ENCODE measurements at regions of chr9 and their contacts with region 1.

Region 1: GRCh38 chr9:114155263-114155972 is at the start of gene COL27A1:
- DNase-seq: peak; percentile 73 to 88 (median 85)
- H3K4me3 ChIP-seq: peak within 1 kb of the TSS in 2 of 4 donors; percentile 51 to 80
- H3K27ac ChIP-seq: peak within 1 kb of the TSS in 3 of 5 donors; percentile 26 to 77 (median 68)
- H3K4me1 ChIP-seq: peaks cover 15 to 17% of the 10 kb centered on the region in 2 donors
- H3K27me3 ChIP-seq: peaks cover 15% of the 10 kb centered on the region
- CTCF ChIP-seq: peak; percentile 80 to 95 (median 93)
- POLR2A ChIP-seq: no peak
- total RNA-seq, gene COL27A1: 3.0 to 28.2 (median 11.1) TPM

Region 2: DNA sequence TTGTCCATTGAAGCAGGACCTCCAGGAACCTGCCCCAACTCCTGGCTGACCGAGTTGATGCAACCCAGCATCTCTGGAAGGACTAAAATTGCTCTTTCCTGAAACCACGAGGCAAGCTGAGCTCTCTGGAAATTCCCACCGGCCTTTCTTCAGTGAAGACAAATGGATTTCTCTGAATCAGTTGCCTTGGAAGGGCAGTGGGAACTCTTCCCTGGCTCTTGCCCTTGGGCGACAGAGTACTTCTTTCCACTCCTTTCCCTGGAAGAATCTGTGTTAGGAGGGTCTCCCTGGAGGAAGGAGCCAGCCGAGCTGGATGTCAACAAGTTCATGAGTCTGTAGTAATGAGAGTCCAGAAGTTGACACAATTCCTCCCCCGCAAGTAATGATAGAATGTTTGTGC is 70.7 kb before region 1 on chr9:
- intact Hi-C with region 1: loop called in 1 of 2 experiments (anchors 5 kb)
- DNase-seq: no peak
- H3K4me3 ChIP-seq: no peak overlapping the region
- H3K27ac ChIP-seq: no peak overlapping the region
- H3K4me1 ChIP-seq: no peaks in the 10 kb centered on the region
- H3K27me3 ChIP-seq: no peaks in the 10 kb centered on the region
- CTCF ChIP-seq: no peak
- POLR2A ChIP-seq: no peak

Region 3: GRCh38 chr9:114271641-114272081 is 116.2 kb after region 1 on chr9:
- intact Hi-C with region 1: loop called (anchors 5 kb)
- DNase-seq: peak in 6 of 7 donors; percentile 47 to 73 (median 60)
- H3K4me3 ChIP-seq: no peak overlapping the region
- H3K27ac ChIP-seq: no peak overlapping the region
- H3K4me1 ChIP-seq: no peaks in the 10 kb centered on the region
- H3K27me3 ChIP-seq: no peaks in the 10 kb centered on the region
- CTCF ChIP-seq: peak; percentile 23 to 74 (median 46)
- POLR2A ChIP-seq: no peak

Region 4: GRCh38 chr9:114285166-114285867 is 129.9 kb after region 1 on chr9:
- intact Hi-C with region 1: loop called (anchors 2 to 5 kb)
- DNase-seq: peak; percentile 42 to 85 (median 57)
- H3K4me3 ChIP-seq: no peak overlapping the region
- H3K27ac ChIP-seq: peak overlapping the region in 1 of 5 donors; percentile 34
- H3K4me1 ChIP-seq: peaks cover 0 to 21% of the 10 kb centered on the region in 2 donors
- H3K27me3 ChIP-seq: no peaks in the 10 kb centered on the region
- CTCF ChIP-seq: no peak
- POLR2A ChIP-seq: no peak

Region 5: DNA sequence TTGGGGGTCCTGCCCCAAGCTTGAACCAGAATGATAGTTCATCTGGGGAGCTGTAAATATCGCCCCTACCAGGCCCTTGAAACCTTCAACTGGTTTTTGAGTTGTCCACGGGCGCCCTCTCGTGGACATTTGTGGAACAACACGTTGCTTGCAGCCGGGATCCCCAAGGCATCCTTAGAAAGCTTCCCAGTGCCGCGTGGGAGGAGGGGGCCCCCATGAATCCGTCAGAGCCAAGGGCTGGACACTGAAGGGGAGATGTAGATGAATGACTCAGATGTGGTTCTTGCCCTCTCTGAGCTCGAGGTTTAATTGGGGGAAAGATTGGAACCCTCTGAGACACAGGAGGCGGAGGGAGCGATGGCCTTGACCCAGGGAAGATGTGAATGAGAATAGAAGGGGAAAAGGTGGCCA is 135.7 kb after region 1 on chr9:
- intact Hi-C with region 1: loop called (anchors 2 to 5 kb)
- DNase-seq: peak; percentile 59 to 91 (median 72)
- H3K4me3 ChIP-seq: no peak overlapping the region
- H3K27ac ChIP-seq: no peak overlapping the region
- H3K4me1 ChIP-seq: no peaks in the 10 kb centered on the region
- H3K27me3 ChIP-seq: no peaks in the 10 kb centered on the region
- CTCF ChIP-seq: peak; percentile 77 to 95 (median 92)
- POLR2A ChIP-seq: no peak